ENCODE measurements at regions of chr9 and their contacts with region 1.

Region 1: GRCh38 chr9:114291064-114291474 is 31.8 kb upstream of the ORM1 start:
- DNase-seq: peak; percentile 84
- ATAC-seq: peak; percentile 59

Region 2: DNA sequence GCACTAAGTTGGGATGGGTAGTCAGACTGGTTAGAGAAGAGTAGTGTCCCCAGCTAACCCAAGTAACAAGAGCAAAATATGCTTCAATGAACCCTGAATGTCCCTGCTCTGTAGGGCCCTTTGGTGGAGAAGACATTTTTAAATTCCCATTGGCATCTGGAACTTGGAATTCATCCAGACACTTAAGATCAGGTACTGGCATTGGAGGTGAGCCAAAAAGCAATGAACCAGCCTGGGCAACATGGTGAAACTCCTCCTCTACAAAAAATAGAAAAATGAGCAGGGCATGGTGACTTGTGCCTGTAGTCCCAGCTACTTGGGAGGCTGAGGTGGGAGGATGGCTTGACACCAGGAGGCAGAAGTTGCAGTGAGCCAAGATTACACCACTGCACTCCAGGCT is 473.9 kb before region 1 on chr9:
- intact Hi-C with region 1: no loop called
- DNase-seq: no peak
- ATAC-seq: no peak

Region 3: GRCh38 chr9:114082017-114082762 is 208.9 kb before region 1 on chr9:
- intact Hi-C with region 1: loop called (anchors 2 kb)
- DNase-seq: peak; percentile 86
- ATAC-seq: peak; percentile 95

Region 4: GRCh38 chr9:114327749-114328148 is 36.7 kb after region 1 on chr9:
- intact Hi-C with region 1: no loop called
- DNase-seq: no peak
- ATAC-seq: no peak

Region 5: GRCh38 chr9:114538241-114538640 is 247.2 kb after region 1 on chr9:
- intact Hi-C with region 1: no loop called
- DNase-seq: no peak
- ATAC-seq: no peak

Measured in Right ventricle myocardium superior (tissue), 1 donor.